Activated T-helper 2 cell treated with anti-CD3 and anti-CD28 coated beads, Interferon-gamma antibody, Interleukin-2, Interleukin-4, amounts not matched to agents 10 μg/mL and 5 μg/mL and 100 μg/mL, durations not matched to agents 14 hours and 24 hours and 36 hours (primary cell): ENCODE measurements at regions of chr5 and their contacts with region 1.

Region 1: GRCh38 chr5:79612667-79613198 is 492 bp downstream of the TENT2 start:
- DNase-seq: no peak
- H3K4me3 Mint-ChIP-seq: peak overlapping the region; percentile 99
- H3K27ac Mint-ChIP-seq: peak overlapping the region; percentile 98
- H3K4me1 Mint-ChIP-seq: peaks cover 22% of the 10 kb centered on the region
- H3K27me3 Mint-ChIP-seq: no peaks in the 10 kb centered on the region

Region 2: GRCh38 chr5:79235634-79236363 is 376.9 kb before region 1 on chr5 and contains the start of gene JMY:
- intact Hi-C with region 1: loop called (anchors 5 kb)
- DNase-seq: peak; percentile 71
- H3K4me3 Mint-ChIP-seq: peak within 1 kb of the TSS; percentile 87
- H3K27ac Mint-ChIP-seq: peak within 1 kb of the TSS; percentile 92
- H3K4me1 Mint-ChIP-seq: peaks cover 22% of the 10 kb centered on the region
- H3K27me3 Mint-ChIP-seq: no peaks in the 10 kb centered on the region
- total RNA-seq, gene JMY: 4.4 and 5.8 TPM in 2 replicates

Region 3: GRCh38 chr5:79514391-79515105 is 98.2 kb before region 1 on chr5:
- intact Hi-C with region 1: loop called (anchors 1 kb)
- DNase-seq: peak; percentile 87
- H3K4me3 Mint-ChIP-seq: peak overlapping the region; percentile 93
- H3K27ac Mint-ChIP-seq: peak overlapping the region; percentile 96
- H3K4me1 Mint-ChIP-seq: peaks cover 35% of the 10 kb centered on the region
- H3K27me3 Mint-ChIP-seq: peaks cover 3% of the 10 kb centered on the region

Region 4: DNA sequence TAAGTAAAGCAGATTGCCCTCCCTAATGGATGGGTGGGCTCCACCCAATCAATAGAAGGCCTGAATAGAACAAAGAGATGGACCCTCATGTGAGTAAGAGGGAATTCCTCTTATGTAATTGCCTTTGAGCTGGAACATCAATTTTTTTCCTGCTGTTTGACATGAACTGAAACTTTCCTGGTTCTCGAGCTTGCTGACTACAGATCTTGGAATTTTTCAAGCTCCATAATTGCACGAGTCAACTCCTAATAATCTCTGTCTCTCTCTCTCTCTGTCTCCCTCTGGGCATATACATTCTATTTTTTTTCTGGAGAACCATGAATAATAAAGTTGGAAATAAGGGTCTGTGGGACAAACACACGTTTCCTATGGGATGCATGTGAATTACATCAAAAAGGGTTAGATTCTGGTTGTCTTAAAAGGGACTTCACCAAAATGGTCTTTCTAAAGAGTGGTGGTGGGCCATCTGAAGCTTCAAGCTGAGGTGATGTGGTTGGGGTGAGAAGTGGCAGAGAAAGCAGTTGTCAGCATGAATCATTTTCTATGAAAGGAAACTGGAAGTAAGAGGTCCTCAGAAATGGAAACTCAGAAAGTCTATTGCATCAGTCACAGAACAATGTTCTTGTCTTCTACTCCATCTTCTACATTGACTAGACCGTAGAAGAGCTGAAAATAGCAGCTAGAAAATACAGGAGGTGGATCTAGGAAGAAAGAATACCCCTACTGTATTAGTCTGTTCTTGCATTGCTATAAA is 51.8 kb before region 1 on chr5:
- intact Hi-C with region 1: loop called (anchors 1 kb)
- DNase-seq: peak; percentile 13
- H3K4me3 Mint-ChIP-seq: peak overlapping the region; percentile 19
- H3K27ac Mint-ChIP-seq: peak overlapping the region; percentile 95
- H3K4me1 Mint-ChIP-seq: peaks cover 48% of the 10 kb centered on the region
- H3K27me3 Mint-ChIP-seq: no peaks in the 10 kb centered on the region

Region 5: DNA sequence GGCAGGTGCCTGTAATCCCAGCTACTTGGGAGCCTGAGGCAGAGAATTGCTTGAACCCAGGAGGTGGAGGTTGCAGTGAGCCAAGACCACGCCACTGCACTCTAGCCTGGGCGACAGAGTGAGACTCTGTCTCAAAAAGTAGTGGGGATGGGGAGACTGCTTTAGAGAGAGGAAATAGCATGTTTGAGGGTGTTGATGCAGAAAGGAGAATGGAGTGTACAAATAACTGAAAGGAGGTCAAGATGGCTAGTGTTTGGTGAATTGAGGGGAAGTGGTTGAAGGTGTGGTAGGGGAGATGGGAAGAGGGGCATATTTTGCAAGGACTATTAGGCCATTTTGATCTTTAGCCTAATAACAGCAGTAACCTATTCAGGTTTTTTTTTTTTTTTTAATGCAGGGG is 17.7 kb after region 1 on chr5:
- intact Hi-C with region 1: no loop called
- DNase-seq: no peak
- H3K4me3 Mint-ChIP-seq: no peak overlapping the region
- H3K27ac Mint-ChIP-seq: no peak overlapping the region
- H3K4me1 Mint-ChIP-seq: peaks cover 16% of the 10 kb centered on the region
- H3K27me3 Mint-ChIP-seq: no peaks in the 10 kb centered on the region

Region 6: GRCh38 chr5:79845448-79846197 is 232.9 kb after region 1 on chr5:
- intact Hi-C with region 1: loop called (anchors 5 kb)
- DNase-seq: peak; percentile 21
- H3K4me3 Mint-ChIP-seq: no peak overlapping the region
- H3K27ac Mint-ChIP-seq: peak overlapping the region; percentile 50
- H3K4me1 Mint-ChIP-seq: peaks cover 22% of the 10 kb centered on the region
- H3K27me3 Mint-ChIP-seq: peaks cover 4% of the 10 kb centered on the region